ENCODE measurements at regions of chr5 and their contacts with region 1.

Region 1: GRCh38 chr5:173868076-173868880 is 19.9 kb upstream of the CPEB4 start:
- DNase-seq: no peak
- H3K4me3 ChIP-seq: no peak overlapping the region
- H3K27ac ChIP-seq: peak overlapping the region; percentile 53 to 100 (median 97)
- H3K27me3 ChIP-seq: no peaks in the 10 kb centered on the region
- CTCF ChIP-seq: no peak

Region 2: DNA sequence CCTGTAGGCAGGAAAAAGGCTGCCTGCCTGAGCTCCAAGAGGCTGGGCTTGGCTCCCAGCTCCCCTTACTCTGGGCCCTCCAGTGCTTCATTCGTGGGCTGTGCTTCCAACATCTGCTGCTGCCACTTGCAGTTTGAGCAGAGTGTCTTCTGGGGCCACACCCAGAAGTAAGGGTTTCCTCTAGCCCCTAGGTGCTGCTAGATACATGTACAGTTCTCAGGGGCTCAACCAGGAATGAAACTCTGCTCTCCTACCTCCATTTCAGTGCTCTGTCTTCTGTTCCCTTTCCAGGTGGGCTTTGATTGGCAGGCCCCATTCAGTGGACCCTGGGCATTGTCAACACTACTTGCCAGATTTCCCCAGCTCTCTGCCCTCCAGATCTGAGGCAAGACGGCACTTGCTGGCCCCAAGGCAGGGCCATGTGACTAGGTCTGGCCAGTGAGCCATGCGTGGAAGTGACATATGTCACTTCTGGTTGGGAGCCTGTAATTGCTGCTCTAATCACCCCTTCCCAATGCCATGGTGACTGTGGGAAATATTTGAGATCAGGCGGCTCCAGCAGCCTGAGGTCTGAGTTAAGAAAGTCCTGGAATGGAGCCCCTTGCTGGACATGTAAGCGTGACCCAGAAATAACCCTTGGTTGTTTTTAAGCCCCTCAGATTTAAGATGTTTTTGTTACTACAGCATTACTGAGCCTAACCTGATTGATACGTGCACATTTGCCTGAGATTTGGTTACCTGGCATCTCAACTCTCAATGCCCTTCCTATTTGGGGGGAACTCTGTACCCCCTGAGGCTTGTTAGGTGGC is 242.4 kb before region 1 on chr5:
- intact Hi-C with region 1: loop called in 1 of 2 experiments (anchors 5 kb)
- DNase-seq: peak in 1 of 10 donors; percentile 32
- H3K4me3 ChIP-seq: no peak overlapping the region
- H3K27ac ChIP-seq: peak overlapping the region; percentile 31 to 93 (median 84)
- H3K27me3 ChIP-seq: no peaks in the 10 kb centered on the region
- CTCF ChIP-seq: no peak

Region 3: DNA sequence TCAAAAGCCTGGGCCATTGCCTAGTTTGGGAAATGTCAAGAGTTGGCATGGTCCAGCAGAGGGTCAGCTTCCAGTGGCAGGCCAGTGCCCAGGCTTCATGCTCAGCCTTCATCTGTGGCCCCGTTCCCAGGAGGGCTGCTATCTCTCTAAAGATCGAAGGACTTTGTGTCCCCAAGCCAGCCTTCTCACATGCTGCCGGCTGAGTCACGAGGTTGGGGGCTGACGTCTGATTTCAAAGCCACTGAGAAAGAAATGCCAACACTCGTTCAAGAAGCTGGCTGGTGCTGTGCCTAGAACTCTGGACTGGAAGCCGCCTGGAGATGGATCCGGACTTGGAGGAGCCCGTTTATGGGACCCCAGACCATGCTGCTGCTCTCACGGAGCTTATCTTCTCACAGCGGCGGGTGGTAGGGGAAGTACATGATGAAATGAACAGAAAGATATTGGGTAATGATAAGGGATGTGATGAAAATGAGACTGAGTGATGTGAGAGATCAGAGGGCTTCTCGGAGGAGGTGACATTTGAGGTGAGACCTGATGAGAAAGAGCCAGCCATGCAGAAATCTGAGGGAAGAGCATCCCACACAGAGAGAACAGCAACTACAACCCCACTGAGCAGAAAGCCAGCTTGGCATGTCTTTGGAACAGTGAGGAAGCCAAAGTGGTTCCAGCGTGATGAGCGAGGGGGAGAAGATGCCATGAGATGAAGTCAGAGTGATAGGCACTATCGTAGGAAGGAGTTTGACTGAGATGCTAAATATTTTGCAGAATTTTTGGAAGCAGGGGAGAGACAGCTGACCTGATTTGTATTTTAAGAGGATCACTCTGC is 196.9 kb before region 1 on chr5:
- intact Hi-C with region 1: loop called in 1 of 2 experiments (anchors 5 kb)
- DNase-seq: peak; percentile 57 to 92 (median 86)
- H3K4me3 ChIP-seq: peak overlapping the region in 54 of 59 donors; percentile 3 to 55 (median 27)
- H3K27ac ChIP-seq: peak overlapping the region; percentile 29 to 95 (median 86)
- H3K27me3 ChIP-seq: no peaks in the 10 kb centered on the region
- CTCF ChIP-seq: peak in 1 of 56 donors; percentile 12

Region 4: DNA sequence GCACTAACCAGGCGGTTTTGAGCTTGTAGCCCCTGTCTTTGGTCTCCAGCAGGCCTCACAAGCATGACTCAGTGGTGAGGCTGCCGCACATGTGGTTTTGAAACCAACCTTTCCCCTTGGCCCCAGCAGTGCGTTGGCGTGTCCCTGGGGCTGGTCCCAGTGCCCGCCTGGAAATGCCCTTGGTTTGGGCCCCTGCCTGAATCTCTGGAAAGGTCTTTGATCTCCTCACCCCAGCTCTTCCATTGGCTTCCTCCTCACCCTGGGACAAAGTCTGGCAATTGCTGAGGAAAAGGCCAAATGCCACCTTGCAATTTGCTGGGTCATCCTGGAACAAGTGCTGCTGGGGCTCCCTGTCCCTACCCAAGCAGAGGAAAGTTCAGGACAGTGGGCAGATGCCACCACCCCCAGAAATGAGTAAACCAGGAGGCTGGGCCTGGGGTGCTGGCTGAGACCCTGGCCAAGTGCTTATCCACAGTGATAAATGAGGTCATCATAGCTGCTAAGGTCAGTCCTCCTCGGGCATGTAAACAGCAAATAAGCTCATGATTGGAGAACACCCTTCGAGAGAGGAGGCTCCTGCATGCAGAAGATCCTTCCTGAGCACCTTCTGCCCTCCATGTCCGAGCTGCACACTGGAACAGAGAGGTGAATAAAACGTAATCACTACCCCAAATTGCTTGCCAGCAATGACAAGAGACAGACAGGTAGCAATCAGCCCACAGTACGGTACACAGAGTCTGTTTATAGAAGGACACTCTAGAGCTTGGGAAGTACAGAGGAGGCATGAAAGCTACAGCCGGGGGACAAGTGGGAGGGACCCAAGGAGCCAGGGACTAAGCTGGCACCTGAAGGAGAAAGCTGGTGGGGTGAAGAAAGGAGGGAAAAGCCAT is 79.0 kb before region 1 on chr5:
- intact Hi-C with region 1: loop called in 1 of 2 experiments (anchors 5 kb)
- DNase-seq: no peak
- H3K4me3 ChIP-seq: no peak overlapping the region
- H3K27ac ChIP-seq: no peak overlapping the region
- H3K27me3 ChIP-seq: no peaks in the 10 kb centered on the region
- CTCF ChIP-seq: no peak

Region 5: DNA sequence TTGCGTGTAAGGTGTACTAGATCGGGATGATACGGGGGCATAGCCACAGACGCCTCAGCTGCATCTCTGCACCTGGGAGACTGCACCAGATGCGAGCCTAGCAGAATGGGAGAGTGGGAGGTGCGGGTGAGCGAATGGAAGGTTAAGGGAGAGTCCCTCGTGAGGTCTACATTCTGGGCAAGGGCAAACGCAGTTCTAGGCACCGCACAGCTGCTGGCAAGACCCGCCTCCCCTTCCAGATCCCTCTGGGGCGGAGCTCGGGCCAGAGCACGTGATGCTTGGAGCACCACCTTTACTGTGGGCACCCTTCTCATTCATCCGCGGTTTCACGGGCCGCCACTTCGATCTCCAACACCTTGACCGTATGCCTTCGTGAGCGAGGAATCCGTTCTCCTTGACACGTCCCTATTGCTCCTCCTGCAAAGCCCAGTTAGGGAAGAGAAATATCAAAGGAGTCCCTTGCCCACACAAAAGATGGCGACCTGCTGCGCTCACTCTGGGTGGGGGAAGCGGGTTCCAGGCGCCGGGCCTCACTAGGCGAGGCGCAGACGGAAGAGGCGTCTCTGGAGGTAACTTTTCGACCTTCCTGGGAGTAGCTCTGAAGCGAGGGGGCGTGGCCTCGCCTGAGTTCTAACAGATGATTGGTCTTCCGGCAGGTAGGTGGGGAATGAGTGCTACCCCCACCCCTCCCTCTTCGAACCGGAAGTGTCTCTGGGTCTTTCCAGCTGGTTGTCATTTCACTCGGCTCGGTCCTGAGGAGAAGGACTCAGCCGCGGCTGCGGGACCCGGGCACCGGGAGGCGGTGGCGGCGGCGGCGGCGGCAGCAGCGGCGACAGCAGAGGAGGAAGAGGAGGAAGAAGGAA is 19.6 kb after region 1 on chr5 and contains the start of gene CPEB4:
- intact Hi-C with region 1: loop called (anchors 1 kb)
- DNase-seq: peak; percentile 98 to 100 (median 100)
- H3K4me3 ChIP-seq: peak within 1 kb of the TSS; percentile 60 to 99 (median 91)
- H3K27ac ChIP-seq: peak within 1 kb of the TSS; percentile 84 to 100 (median 98)
- H3K27me3 ChIP-seq: no peaks in the 10 kb centered on the region
- CTCF ChIP-seq: peak in 18 of 56 donors; percentile 4 to 40 (median 26)
- total RNA-seq, gene CPEB4: 95.3 to 182 (median 133) TPM

Region 6: GRCh38 chr5:173972925-173973615 is 104.8 kb after region 1 on chr5:
- intact Hi-C with region 1: loop called in 1 of 2 experiments (anchors 2 kb)
- DNase-seq: peak; percentile 74 to 93 (median 88)
- H3K4me3 ChIP-seq: peak overlapping the region; percentile 34 to 79 (median 64)
- H3K27ac ChIP-seq: peak overlapping the region in 55 of 59 donors; percentile 9 to 87 (median 69)
- H3K27me3 ChIP-seq: no peaks in the 10 kb centered on the region
- CTCF ChIP-seq: peak; percentile 83 to 98 (median 94)

Measured in dorsolateral prefrontal cortex (tissue), 120 donors.